ENCODE measurements at regions of chr2 and their contacts with region 1.

Region 1: DNA sequence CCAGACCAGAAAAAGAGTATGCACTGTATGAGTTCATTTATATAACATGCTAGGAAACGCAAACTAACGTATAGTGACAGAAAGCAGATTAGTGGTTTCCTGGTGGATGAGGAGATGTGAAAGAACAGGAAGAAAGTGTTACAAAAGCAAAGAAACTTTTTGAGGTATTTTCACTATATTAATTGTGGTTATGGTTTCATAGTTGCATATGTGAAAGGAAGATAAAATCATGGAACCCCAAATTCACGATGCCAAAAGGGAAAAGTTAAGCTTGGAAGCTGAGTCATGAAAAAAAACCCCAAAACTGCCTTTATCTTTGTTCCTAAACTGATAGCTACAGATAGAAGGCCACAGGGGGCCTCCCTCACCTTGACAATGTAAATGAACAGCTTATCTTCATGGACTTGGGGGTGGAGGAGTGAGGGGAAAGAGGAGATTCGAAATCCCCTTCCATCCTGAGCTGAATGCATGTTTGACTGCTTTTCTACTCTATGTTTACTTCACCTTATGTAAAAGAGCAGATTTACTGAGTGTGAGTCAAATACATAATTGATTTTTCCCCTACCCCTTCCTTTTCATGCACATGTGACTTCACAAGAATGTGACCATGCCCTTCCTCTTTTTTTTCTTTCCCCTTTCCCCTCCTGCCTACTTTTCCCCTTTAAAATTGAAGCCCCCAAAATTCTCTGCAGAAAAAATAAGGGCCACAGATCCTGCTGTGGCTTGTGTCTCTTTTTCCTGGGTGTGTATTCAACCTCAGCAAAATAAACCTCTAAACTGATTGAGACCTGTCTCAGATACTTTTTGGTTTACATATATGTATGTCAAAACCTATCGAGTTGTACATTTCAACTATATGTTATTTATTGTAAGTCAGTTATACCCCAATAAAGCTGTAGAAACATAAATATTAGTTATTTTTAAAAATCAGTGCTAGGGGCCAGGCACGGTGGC is 100.1 kb upstream of the TLK1 start:
- DNase-seq: no peak
- H3K4me3 ChIP-seq: no peak overlapping the region
- H3K27ac ChIP-seq: no peak overlapping the region
- H3K4me1 ChIP-seq: no peaks in the 10 kb centered on the region
- H3K27me3 ChIP-seq: no peaks in the 10 kb centered on the region
- CTCF ChIP-seq: no peak
- POLR2A ChIP-seq: no peak

Region 2: DNA sequence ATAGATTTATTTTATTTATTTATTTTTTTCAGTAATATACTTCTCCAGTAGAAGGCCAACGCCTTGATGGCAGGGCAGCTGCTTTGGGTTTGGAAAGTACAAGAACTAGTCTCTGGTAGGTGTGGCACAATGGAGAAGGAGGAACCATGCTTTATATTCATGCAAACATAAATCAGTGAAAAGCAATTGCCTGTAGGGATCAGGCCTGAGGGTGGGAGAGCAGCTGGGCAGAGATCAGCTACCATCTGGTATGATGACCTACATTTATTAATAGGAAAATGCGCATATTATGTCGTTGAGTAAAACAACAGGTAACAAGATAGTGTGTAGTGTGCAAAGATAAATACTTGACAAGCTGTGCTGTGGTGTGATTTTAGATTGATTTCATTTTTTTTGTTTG is 20.4 kb after region 1 on chr2:
- intact Hi-C with region 1: loop called (anchors 2 kb)
- DNase-seq: no peak
- H3K4me3 ChIP-seq: no peak overlapping the region
- H3K27ac ChIP-seq: no peak overlapping the region
- H3K4me1 ChIP-seq: no peaks in the 10 kb centered on the region
- H3K27me3 ChIP-seq: no peaks in the 10 kb centered on the region
- CTCF ChIP-seq: no peak
- POLR2A ChIP-seq: no peak